ENCODE measurements at regions of chr16 and their contacts with region 1.

Region 1: GRCh38 chr16:11123666-11124065 is 132.3 kb downstream of the SOCS1 start:
- DNase-seq: no peak
- ATAC-seq: no peak

Region 2: GRCh38 chr16:11049380-11050059 is 74.1 kb before region 1 on chr16:
- intact Hi-C with region 1: loop called (anchors 2 kb)
- DNase-seq: no peak
- ATAC-seq: no peak

Measured in sciatic nerve (tissue), 2 donors.